ENCODE measurements at regions of chr12 and their contacts with region 1.

Region 1: GRCh38 chr12:3135522-3136461 is 58.6 kb downstream of the TSPAN9 start:
- DNase-seq: peak; percentile 78

Region 2: GRCh38 chr12:3076730-3077571 is 58.8 kb before region 1 on chr12 and contains the start of gene TSPAN9:
- in situ Hi-C with region 1: no loop called
- DNase-seq: peak; percentile 86

Region 3: GRCh38 chr12:3803865-3804472 is 668.2 kb after region 1 on chr12:
- in situ Hi-C with region 1: loop called (anchors 25 kb)
- DNase-seq: peak; percentile 75